BJ (cell line): ENCODE measurements at regions of chr12 and their contacts with region 1.

Region 1: DNA sequence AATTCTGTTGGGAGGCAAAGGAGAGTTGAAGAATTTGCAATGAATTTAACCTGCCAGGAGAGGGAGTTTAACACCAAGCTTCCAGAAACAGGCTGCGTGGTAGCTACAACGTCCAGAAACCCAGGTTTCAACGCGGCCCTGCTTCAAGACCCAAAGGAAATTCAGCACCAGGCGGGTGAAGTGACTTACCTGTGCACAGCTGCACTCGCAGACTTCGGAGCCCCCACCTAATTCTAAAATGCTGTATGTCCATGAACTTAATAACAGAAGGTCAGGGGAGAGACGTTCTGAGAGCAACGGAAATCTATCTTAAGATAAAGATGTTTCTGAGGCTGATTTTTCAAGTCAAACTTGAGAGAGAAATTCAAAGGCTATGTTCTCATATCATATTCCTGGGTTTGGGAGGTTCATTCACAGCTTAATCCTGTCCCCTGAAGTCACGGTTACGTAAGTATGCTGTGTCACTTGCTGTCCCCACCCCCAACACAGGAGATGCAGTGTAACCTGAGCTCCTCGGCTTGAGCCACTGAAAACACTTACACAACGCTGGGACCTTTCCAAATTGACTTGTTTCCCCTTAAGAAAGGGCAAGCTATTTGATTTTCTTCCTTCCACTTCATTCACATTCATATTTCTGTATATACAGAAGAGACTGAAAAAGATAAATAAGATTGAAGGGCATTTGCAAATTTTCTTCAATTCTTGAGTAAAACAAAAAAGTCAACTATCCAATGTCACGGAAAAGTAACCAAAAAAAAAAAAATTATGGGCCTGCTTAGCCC is 22.7 kb downstream of the CLIP1 start:
- DNase-seq: peak; percentile 77
- H3K4me3 ChIP-seq: no peak overlapping the region
- H3K27me3 ChIP-seq: no peaks in the 10 kb centered on the region
- CTCF ChIP-seq: peak; percentile 69

Region 2: DNA sequence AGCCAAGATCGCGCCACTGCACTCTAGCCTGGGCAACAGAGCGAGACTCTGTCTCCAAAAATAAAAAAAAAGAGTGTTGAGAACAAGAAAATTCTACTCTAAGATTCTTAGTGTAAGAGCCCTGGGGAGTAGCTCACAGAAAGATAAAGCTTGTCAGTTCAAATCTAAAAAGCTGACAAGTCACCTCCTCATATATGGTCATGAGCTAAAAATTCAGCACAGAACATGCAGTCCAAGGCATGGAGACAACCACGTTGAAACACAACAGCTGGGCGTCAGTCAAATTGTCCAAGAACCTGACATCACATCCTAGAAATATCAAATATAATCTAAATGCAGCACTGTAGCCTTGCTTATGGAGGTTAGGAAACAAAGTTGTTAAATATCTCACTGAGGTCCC is 25.1 kb before region 1 on chr12:
- CTCF ChIA-PET with region 1: no interaction called
- POLR2A ChIA-PET with region 1: no interaction called
- DNase-seq: no peak
- H3K4me3 ChIP-seq: no peak overlapping the region
- H3K27me3 ChIP-seq: no peaks in the 10 kb centered on the region
- CTCF ChIP-seq: no peak

Region 3: DNA sequence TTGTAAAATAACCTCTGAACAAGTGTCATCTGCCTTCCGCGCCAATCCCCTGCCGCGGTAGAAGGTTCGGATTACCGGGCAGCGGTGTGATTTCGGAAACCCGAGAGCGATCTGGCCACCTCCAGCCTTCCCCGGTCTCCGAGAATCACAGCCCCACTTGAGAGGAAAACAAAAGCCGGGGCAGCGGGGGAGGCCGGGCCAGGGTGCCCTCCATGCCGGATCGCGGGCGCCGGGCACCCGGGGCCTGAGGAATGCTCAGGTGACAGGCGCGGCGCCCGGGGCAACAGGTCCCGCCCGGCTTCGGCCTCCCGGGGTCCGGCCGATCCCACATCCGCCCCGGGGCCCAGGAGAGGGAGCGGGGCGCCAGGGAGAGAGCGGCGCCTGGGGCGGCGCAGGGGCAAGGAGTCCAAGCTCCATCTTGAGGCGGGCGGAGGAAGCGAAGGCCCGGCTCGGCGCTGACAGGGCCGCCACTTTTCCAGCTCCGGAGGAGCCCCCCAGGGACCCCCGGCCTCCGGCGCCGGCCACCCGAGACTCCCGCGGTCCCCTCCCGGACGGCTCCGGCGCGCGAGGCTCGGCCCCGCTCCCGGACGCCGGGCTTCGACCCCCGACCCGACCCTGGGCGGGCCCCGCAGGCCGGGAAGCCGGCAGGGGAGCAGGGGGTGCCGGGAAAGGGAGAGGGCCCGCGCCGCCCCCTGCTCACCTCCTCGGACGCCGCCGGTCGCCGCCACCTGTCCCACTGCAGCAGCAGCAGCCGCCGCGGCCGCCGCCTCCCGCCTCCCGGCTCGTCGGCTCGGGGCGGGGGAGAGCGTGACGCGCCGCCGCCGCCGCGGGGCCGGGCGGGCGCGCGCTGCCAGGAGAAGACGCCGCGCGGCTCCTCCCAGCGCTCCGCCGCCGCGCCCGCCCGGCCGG is 22.3 kb after region 1 on chr12 and contains the start of gene CLIP1:
- CTCF ChIA-PET with region 1: interaction called, 15 read pairs
- POLR2A ChIA-PET with region 1: no interaction called
- DNase-seq: no peak
- H3K4me3 ChIP-seq: peak within 1 kb of the TSS; percentile 56
- H3K27me3 ChIP-seq: no peaks in the 10 kb centered on the region
- CTCF ChIP-seq: peak; percentile 51
- polyA plus RNA-seq, gene CLIP1: 81.2 and 104 TPM in 2 replicates

Region 4: GRCh38 chr12:122471324-122472226 is 71.8 kb after region 1 on chr12:
- CTCF ChIA-PET with region 1: interaction called, 85 read pairs
- POLR2A ChIA-PET with region 1: interaction called, 29 read pairs
- DNase-seq: peak; percentile 37
- H3K4me3 ChIP-seq: no peak overlapping the region
- H3K27me3 ChIP-seq: no peaks in the 10 kb centered on the region
- CTCF ChIP-seq: peak; percentile 74

Region 5: GRCh38 chr12:122483969-122484368 is 84.2 kb after region 1 on chr12:
- CTCF ChIA-PET with region 1: interaction called, 13 read pairs
- POLR2A ChIA-PET with region 1: no interaction called
- DNase-seq: no peak
- H3K4me3 ChIP-seq: no peak overlapping the region
- H3K27me3 ChIP-seq: no peaks in the 10 kb centered on the region
- CTCF ChIP-seq: no peak